Breast epithelium (tissue), 4 donors: ENCODE measurements at regions of chr14 and their contacts with region 1.

Region 1: DNA sequence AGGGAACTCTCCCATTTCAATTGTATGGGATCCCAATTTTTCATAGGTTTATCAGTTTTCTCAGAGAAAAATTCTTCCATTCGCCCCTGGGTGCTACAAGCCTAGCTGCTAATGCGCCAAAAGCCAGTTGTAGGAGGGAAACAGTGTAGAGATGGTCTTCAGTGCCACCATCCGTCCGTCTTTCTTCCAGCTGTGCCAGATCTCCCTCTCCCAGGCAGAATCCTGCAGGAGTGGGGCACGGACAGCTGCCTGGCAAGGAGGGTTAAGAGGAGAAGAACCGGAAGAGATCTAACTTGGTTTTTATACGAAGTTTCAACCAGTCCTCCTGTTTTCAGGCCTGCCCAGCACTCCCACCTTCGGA is 38.9 kb upstream of the FUT8 start:
- DNase-seq: no peak
- H3K4me3 ChIP-seq: peak overlapping the region in 2 of 3 donors; percentile 30 to 35
- H3K27ac ChIP-seq: no peak overlapping the region
- H3K4me1 ChIP-seq: no peaks in the 10 kb centered on the region
- H3K27me3 ChIP-seq: no peaks in the 10 kb centered on the region
- CTCF ChIP-seq: no peak
- POLR2A ChIP-seq: no peak

Region 2: GRCh38 chr14:65401763-65402162 is 28.1 kb after region 1 on chr14:
- intact Hi-C with region 1: loop called (anchors 2 kb)
- DNase-seq: no peak
- H3K4me3 ChIP-seq: no peak overlapping the region
- H3K27ac ChIP-seq: no peak overlapping the region
- H3K4me1 ChIP-seq: no peaks in the 10 kb centered on the region
- H3K27me3 ChIP-seq: no peaks in the 10 kb centered on the region
- CTCF ChIP-seq: no peak
- POLR2A ChIP-seq: no peak